Head of caudate nucleus (tissue), 42 donors: ENCODE measurements at regions of chr5 and their contacts with region 1.

Region 1: GRCh38 chr5:16791036-16791705 is 144.9 kb downstream of the MYO10 start:
- DNase-seq: peak in 26 of 42 donors; percentile 15 to 80 (median 44)

Region 2: GRCh38 chr5:16666883-16667398 is 124.2 kb before region 1 on chr5:
- intact Hi-C with region 1: no loop called
- DNase-seq: peak in 40 of 42 donors; percentile 28 to 85 (median 65)

Region 3: GRCh38 chr5:17204133-17204489 is 412.9 kb after region 1 on chr5:
- intact Hi-C with region 1: loop called (anchors 5 kb)
- DNase-seq: peak in 2 of 42 donors; percentile 32 to 34